Breast epithelium (tissue), 4 donors: ENCODE measurements at regions of chr12 and their contacts with region 1.

Region 1: DNA sequence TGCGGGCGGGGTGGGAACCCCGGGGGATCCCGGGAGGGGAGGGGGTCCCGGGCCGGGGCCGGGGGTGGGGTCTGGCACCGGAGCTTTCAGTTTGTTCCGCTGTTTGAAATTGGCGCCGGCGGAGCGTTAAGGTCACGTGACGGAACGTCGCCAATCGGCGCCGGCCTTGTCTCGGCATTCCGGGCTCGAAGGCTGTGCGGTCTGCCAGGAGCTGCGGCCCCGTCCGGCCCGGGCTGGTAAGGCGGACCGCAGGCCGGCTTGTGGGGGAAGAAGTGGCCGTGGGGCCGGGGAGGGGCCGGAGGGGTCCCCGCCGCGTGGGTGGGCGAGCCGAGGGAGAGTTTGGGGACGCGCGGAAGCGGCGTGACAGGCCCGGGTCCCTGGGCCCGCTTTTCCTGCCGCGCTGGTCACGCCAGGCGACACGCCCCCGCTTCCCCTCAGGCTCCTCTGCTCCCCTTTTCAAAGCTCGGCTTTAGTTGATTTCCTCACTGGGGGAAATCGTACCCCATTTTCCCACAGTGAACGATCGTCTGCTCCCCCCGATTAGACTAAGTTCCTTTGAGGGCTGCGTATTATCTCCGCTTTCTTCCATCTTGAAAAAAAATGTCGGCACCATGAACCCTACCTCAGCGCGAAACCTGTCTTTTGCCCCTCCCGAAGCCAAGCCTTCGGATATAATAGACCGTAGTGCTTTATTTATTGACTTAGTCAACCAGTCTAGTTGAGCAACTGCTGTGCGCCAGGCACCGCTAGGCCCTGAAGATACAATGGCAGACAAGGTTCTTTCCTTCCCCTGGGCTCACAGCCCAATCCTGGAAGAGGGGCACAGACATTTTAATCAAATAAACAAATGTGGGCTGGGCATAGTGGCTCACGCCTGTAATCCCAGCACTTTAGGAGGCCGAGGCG is at the starts of genes FOXM1 and RHNO1:
- DNase-seq: peak; percentile 84 to 90
- H3K4me3 ChIP-seq: peak within 1 kb of the TSS; percentile 77 to 94 (median 90)
- H3K27ac ChIP-seq: peak within 1 kb of the TSS; percentile 95 to 98
- H3K4me1 ChIP-seq: peaks cover 7 to 13% of the 10 kb centered on the region in 2 donors
- H3K27me3 ChIP-seq: no peaks in the 10 kb centered on the region
- CTCF ChIP-seq: no peak
- POLR2A ChIP-seq: peak; percentile 70
- total RNA-seq, gene FOXM1: under 0.01 to 2.4 (median 0.44) TPM
- total RNA-seq, gene RHNO1: 4.3 to 18.4 (median 15.7) TPM

Region 2: DNA sequence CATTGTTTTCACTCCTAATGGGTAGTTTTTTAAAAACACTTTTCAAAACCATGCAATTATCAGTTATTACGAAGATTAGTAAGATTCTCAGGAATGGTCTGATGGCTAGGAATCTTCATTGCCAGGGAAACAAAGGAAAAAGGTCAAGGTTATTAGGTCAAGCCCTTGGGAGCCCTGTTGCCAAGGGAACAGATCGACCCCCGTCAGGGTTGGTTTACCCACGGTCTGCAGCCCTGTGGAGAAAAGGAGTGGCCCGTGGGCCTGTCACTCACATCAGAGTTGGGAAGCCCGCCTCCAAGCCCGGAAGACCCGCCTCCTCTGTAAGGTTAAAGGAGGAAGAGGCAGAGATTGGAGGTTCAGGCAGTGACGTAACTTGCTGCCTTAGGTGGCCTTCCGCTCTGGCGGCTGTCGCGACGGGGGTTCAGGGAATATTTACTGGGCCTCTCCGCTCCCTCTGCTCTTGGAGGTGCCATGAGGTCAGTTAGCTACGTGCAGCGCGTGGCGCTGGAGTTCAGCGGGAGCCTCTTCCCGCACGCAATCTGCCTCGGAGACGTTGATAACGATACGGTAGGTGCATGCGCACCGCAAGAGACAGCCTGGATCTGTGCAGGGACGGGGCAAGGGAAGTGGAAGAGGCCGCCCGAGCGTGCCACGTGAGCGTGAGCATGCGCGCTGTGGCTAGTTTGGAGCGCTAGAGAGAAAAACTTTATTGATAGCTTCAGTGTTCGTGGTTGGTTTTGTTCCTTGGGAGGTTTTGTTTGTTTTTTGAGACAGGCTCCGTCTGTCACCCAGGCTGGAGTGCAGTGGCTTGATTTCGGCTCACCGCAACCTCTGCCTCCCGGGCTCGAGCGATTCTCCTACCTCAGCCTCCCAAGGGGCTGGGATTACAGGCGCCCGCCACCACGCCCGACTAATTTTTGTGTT is 64.7 kb before region 1 on chr12 and contains the start of gene ITFG2:
- intact Hi-C with region 1: loop called (anchors 5 kb)
- DNase-seq: peak; percentile 94 to 98
- H3K4me3 ChIP-seq: peak within 1 kb of the TSS; percentile 59 to 78 (median 77)
- H3K27ac ChIP-seq: peak within 1 kb of the TSS; percentile 89 to 90
- H3K4me1 ChIP-seq: no peaks in the 10 kb centered on the region
- H3K27me3 ChIP-seq: no peaks in the 10 kb centered on the region
- CTCF ChIP-seq: no peak
- POLR2A ChIP-seq: peak; percentile 72
- total RNA-seq, gene ITFG2: 22.2 to 48.9 (median 35.1) TPM